CD8-positive, alpha-beta memory T cell (primary cell): ENCODE measurements at regions of chr3 and their contacts with region 1.

Region 1: DNA sequence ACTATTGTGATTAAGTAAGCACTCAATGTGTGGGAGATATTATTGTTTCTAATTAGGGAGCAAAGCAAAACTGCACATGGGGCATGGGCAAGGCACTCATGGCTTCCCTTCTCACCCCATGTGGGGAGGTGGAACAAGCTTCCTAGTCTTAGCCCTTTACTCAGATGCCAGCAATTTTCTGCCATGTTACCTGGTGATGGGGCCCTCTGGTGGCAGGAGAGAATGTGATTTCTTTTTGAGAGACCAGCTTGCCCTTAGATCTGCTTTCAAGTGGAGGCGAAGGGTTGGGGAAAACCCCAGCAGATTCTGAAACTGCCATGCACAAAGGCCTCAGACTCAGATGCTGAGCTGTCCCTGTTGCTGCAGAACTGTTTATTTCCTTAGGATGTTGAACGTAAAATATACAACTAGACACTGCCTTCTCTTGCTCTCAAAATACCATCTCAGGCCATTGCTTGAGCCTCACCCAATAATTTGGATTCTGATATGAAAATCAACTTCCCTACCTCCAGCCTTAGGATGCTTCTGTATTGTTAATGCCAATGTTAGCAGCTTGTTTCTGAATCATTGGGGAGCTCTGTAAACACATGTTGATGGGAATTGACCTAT is 130.2 kb upstream of the TPRG1 start:
- DNase-seq: peak; percentile 33 to 80 (median 64)
- H3K4me3 ChIP-seq: no peak overlapping the region
- H3K4me3 Mint-ChIP-seq: no peak overlapping the region
- H3K27ac ChIP-seq: no peak overlapping the region
- H3K27ac Mint-ChIP-seq: peak overlapping the region; percentile 5 to 83 (median 50)
- H3K4me1 ChIP-seq: peaks cover 4% of the 10 kb centered on the region
- H3K4me1 Mint-ChIP-seq: peaks cover 8 to 12% (median 10%) of the 10 kb centered on the region in 3 donors
- H3K27me3 ChIP-seq: no peaks in the 10 kb centered on the region
- H3K27me3 Mint-ChIP-seq: no peaks in the 10 kb centered on the region

Region 2: DNA sequence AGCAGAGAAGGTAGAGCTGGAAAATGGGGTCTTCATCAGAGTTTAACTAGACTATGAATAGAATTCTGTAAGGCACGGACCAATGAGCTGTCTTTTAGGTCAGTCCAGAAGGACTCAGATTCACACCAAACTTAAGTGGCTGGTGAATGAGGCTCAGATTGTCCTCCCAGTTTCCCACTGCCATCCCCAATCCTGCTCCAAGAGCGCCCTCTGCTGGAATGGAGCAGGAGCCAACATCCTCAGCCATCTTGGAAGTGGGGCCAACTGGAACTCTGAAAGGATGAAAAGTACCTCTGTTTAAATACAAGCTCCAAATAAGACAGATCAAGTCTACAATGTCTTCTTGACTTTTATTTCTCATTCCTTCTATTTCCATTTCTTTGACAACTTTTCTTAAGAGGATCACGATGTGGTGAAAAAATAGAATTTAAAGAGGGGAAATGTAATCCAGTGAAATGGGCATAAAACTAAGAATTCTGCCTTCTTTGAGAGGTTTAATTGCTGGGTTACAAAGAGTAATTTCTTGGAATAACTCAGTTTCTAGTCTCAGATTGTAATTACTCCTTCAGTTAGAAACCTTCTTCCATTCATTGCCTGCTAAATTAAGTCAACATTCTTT is 86.9 kb before region 1 on chr3:
- CTCF ChIA-PET with region 1: interaction called, 18 read pairs
- POLR2A ChIA-PET with region 1: no interaction called
- DNase-seq: peak; percentile 54 to 77 (median 56)
- H3K4me3 ChIP-seq: no peak overlapping the region
- H3K4me3 Mint-ChIP-seq: no peak overlapping the region
- H3K27ac ChIP-seq: no peak overlapping the region
- H3K27ac Mint-ChIP-seq: peak overlapping the region in 1 of 8 donors; percentile 42
- H3K4me1 ChIP-seq: no peaks in the 10 kb centered on the region
- H3K4me1 Mint-ChIP-seq: no peaks in the 10 kb centered on the region
- H3K27me3 ChIP-seq: no peaks in the 10 kb centered on the region
- H3K27me3 Mint-ChIP-seq: no peaks in the 10 kb centered on the region

Region 3: GRCh38 chr3:189123595-189124387 is 82.2 kb after region 1 on chr3:
- CTCF ChIA-PET with region 1: interaction called, 14 read pairs
- POLR2A ChIA-PET with region 1: no interaction called
- DNase-seq: no peak
- H3K4me3 ChIP-seq: peak overlapping the region; percentile 30
- H3K4me3 Mint-ChIP-seq: peak overlapping the region; percentile 81 to 95 (median 86)
- H3K27ac ChIP-seq: no peak overlapping the region
- H3K27ac Mint-ChIP-seq: peak overlapping the region; percentile 17 to 98 (median 92)
- H3K4me1 ChIP-seq: peaks cover 13% of the 10 kb centered on the region
- H3K4me1 Mint-ChIP-seq: peaks cover 39 to 72% (median 72%) of the 10 kb centered on the region in 3 donors
- H3K27me3 ChIP-seq: no peaks in the 10 kb centered on the region
- H3K27me3 Mint-ChIP-seq: peaks cover 0 to 4% of the 10 kb centered on the region in 2 donors

Region 4: GRCh38 chr3:189132231-189132707 is 90.7 kb after region 1 on chr3:
- CTCF ChIA-PET with region 1: interaction called, 13 read pairs
- POLR2A ChIA-PET with region 1: interaction called, 6 read pairs
- DNase-seq: peak; percentile 61 to 91 (median 70)
- H3K4me3 ChIP-seq: peak overlapping the region; percentile 23
- H3K4me3 Mint-ChIP-seq: peak overlapping the region; percentile 5 to 81 (median 65)
- H3K27ac ChIP-seq: peak overlapping the region; percentile 82
- H3K27ac Mint-ChIP-seq: peak overlapping the region; percentile 94 to 99 (median 97)
- H3K4me1 ChIP-seq: peaks cover 25% of the 10 kb centered on the region
- H3K4me1 Mint-ChIP-seq: peaks cover 46 to 85% (median 67%) of the 10 kb centered on the region in 3 donors
- H3K27me3 ChIP-seq: no peaks in the 10 kb centered on the region
- H3K27me3 Mint-ChIP-seq: no peaks in the 10 kb centered on the region

Region 5: GRCh38 chr3:189148081-189148507 is 106.5 kb after region 1 on chr3:
- CTCF ChIA-PET with region 1: interaction called, 55 read pairs
- POLR2A ChIA-PET with region 1: no interaction called
- DNase-seq: peak; percentile 43 to 73 (median 53)
- H3K4me3 ChIP-seq: no peak overlapping the region
- H3K4me3 Mint-ChIP-seq: no peak overlapping the region
- H3K27ac ChIP-seq: no peak overlapping the region
- H3K27ac Mint-ChIP-seq: peak overlapping the region in 2 of 8 donors; percentile 5 to 9
- H3K4me1 ChIP-seq: peaks cover 18% of the 10 kb centered on the region
- H3K4me1 Mint-ChIP-seq: peaks cover 16 to 32% (median 25%) of the 10 kb centered on the region in 3 donors
- H3K27me3 ChIP-seq: no peaks in the 10 kb centered on the region
- H3K27me3 Mint-ChIP-seq: peaks cover 0 to 3% of the 10 kb centered on the region in 2 donors